Sciatic nerve (tissue), 2 donors: ENCODE measurements at regions of chr4 and their contacts with region 1.

Region 1: GRCh38 chr4:106384878-106385277 is 16.3 kb upstream of the GIMD1 start:
- DNase-seq: no peak
- ATAC-seq: no peak

Region 2: GRCh38 chr4:106160560-106160959 is 224.3 kb before region 1 on chr4:
- intact Hi-C with region 1: no loop called
- DNase-seq: no peak
- ATAC-seq: peak; percentile 58

Region 3: DNA sequence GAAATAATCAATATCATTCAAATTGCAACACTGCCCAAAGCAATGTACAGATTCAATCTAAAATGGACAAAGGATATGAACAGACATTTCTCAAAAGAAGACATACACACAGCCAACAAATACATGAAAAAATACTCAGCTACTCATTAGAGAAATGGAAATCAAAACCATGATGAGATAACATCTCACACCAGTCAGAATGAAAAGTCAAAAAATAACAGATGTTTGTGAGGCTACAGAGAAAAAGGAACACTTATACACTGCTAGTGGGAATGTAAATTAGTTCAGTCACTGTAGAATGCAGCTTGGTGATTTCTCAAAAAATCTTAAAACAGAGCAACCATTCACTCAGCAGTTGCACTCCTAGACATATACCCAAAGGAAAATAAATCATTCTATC is 446.0 kb after region 1 on chr4:
- intact Hi-C with region 1: loop called (anchors 5 kb)
- DNase-seq: no peak
- ATAC-seq: no peak